Activated T-helper 2 cell treated with anti-CD3 and anti-CD28 coated beads, Interferon-gamma antibody, Interleukin-2, Interleukin-4, amounts not matched to agents 10 μg/mL and 5 μg/mL and 100 μg/mL, durations not matched to agents 14 hours and 24 hours and 36 hours (primary cell): ENCODE measurements at regions of chr21 and their contacts with region 1.

Region 1: DNA sequence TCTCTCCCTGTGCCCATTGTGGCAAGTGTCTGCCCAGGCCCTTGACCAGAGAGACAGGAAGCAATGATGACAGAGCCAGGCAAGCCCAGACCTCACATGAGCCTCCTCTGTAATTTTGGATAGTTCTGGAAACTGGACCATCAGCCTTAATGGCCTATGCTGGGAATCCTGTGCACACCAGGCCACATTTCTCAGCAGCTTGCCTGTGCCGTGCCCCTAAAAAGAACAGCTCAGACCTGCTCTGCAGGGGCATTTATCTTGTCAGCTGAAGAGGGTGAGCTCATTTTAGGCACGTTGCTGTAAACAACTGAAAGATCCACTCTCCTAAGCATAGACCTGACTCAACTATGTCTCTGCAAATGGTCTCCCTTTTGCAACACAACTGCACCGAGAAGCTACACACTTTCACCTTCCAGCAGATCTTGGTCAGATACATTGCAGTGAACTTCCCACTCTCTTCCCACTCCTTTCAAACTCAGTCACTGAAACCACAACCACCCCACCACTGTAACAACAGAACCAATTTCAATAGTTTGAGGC is 53.5 kb upstream of the BACH1 start:
- DNase-seq: no peak
- H3K4me3 Mint-ChIP-seq: no peak overlapping the region
- H3K27ac Mint-ChIP-seq: peak overlapping the region; percentile 17
- H3K4me1 Mint-ChIP-seq: peaks cover 9% of the 10 kb centered on the region
- H3K27me3 Mint-ChIP-seq: peaks cover 29% of the 10 kb centered on the region

Region 2: DNA sequence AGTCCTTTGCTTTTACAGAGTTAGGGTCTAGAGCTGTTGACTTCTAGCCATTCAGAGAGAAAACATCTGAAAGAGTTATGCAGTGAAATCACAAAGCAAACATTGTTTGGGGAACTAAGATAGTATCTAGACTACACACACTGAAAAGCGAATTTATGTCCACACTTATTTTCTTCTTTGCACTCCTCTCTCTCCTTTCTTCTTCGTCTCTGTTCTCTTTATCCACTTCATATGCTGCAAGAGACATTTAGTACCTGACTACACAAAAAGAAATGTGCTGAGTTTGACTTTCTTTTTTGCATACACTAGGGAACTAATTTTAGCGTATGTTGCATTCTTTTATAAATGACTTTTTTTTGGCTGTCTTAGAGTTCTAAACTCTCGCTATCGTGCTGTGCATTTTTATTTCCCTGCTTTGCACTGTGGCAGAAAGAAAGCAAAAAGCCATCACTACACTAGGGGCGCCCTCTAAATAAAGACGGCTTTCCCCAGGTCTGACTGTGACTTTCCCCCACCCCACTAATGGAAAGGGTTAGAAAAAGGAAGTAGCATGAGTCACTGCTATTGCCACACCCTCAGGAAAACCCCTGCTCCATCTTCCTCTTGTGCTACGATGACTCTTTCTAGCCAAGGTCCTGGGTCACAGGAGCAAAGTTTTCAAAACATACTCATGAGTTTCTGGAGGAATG is 49.0 kb before region 1 on chr21:
- intact Hi-C with region 1: loop called (anchors 1 kb)
- DNase-seq: peak; percentile 64
- H3K4me3 Mint-ChIP-seq: peak overlapping the region; percentile 80
- H3K27ac Mint-ChIP-seq: peak overlapping the region; percentile 80
- H3K4me1 Mint-ChIP-seq: peaks cover 32% of the 10 kb centered on the region
- H3K27me3 Mint-ChIP-seq: no peaks in the 10 kb centered on the region

Region 3: GRCh38 chr21:29217818-29218291 is 27.3 kb before region 1 on chr21:
- intact Hi-C with region 1: no loop called
- DNase-seq: no peak
- H3K4me3 Mint-ChIP-seq: no peak overlapping the region
- H3K27ac Mint-ChIP-seq: no peak overlapping the region
- H3K4me1 Mint-ChIP-seq: no peaks in the 10 kb centered on the region
- H3K27me3 Mint-ChIP-seq: peaks cover 3% of the 10 kb centered on the region

Region 4: GRCh38 chr21:29306920-29307319 is 61.7 kb after region 1 on chr21:
- intact Hi-C with region 1: no loop called
- DNase-seq: no peak
- H3K4me3 Mint-ChIP-seq: no peak overlapping the region
- H3K27ac Mint-ChIP-seq: peak overlapping the region; percentile 52
- H3K4me1 Mint-ChIP-seq: peaks cover 48% of the 10 kb centered on the region
- H3K27me3 Mint-ChIP-seq: no peaks in the 10 kb centered on the region

Region 5: GRCh38 chr21:29318354-29318753 is 73.2 kb after region 1 on chr21:
- intact Hi-C with region 1: no loop called
- DNase-seq: no peak
- H3K4me3 Mint-ChIP-seq: no peak overlapping the region
- H3K27ac Mint-ChIP-seq: no peak overlapping the region
- H3K4me1 Mint-ChIP-seq: peaks cover 16% of the 10 kb centered on the region
- H3K27me3 Mint-ChIP-seq: no peaks in the 10 kb centered on the region

Region 6: GRCh38 chr21:29349702-29350101 is 104.5 kb after region 1 on chr21:
- intact Hi-C with region 1: loop called (anchors 2 kb)
- DNase-seq: no peak
- H3K4me3 Mint-ChIP-seq: no peak overlapping the region
- H3K27ac Mint-ChIP-seq: no peak overlapping the region
- H3K4me1 Mint-ChIP-seq: peaks cover 30% of the 10 kb centered on the region
- H3K27me3 Mint-ChIP-seq: no peaks in the 10 kb centered on the region